Thyroid gland (tissue), 4 donors: ENCODE measurements at regions of chr10 and their contacts with region 1.

Region 1: GRCh38 chr10:48215488-48216204 is 58.9 kb downstream of the FRMPD2 start:
- DNase-seq: peak; percentile 52 to 66
- H3K4me3 ChIP-seq: no peak overlapping the region
- H3K27ac ChIP-seq: no peak overlapping the region
- H3K4me1 ChIP-seq: no peaks in the 10 kb centered on the region
- H3K27me3 ChIP-seq: no peaks in the 10 kb centered on the region
- CTCF ChIP-seq: peak in 5 of 6 experiments; percentile 37 to 69 (median 58)
- POLR2A ChIP-seq: no peak

Region 2: DNA sequence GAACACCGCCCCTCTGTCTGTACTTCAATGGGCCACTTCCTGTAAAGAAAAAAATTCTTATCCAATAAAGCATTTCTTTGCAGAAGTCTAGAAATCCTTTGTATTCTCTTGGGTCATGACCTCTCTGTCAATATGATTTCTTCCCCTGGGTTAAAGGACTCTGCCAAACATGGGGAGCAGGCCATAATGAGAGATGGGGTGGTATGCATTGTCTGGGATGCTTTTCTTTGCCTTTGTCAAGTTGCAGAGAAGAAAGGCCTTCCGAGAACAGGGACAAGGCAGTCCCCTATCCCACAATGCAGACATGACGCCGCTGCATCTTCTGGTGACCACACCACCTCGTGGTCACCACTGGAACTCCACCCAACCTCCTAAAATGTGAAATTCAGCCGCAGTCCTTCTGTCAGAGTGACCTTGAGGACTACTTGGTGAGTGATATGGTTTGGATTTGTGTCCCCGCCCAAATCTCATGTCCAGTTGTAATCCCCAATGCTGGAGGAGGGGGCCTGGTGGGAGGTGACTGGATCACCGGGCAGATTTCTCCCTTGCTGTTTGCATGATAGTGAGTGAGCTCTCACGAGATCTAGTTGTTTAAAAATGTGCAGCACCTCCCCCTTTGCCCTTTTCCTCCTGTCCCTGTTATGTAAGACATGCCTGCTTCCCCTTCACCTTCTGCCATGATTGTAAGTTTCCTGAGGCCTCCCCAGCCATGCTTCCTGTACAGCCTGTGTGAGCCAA is 74.0 kb after region 1 on chr10:
- intact Hi-C with region 1: loop called (anchors 10 kb)
- DNase-seq: peak; percentile 71 to 78
- H3K4me3 ChIP-seq: no peak overlapping the region
- H3K27ac ChIP-seq: peak overlapping the region in 2 of 3 donors; percentile 24 to 42
- H3K4me1 ChIP-seq: peaks cover 14 to 30% of the 10 kb centered on the region in 2 donors
- H3K27me3 ChIP-seq: no peaks in the 10 kb centered on the region
- CTCF ChIP-seq: peak; percentile 55 to 91 (median 80)
- POLR2A ChIP-seq: no peak